Transverse colon (tissue), 4 donors: ENCODE measurements at regions of chr7 and their contacts with region 1.

Region 1: DNA sequence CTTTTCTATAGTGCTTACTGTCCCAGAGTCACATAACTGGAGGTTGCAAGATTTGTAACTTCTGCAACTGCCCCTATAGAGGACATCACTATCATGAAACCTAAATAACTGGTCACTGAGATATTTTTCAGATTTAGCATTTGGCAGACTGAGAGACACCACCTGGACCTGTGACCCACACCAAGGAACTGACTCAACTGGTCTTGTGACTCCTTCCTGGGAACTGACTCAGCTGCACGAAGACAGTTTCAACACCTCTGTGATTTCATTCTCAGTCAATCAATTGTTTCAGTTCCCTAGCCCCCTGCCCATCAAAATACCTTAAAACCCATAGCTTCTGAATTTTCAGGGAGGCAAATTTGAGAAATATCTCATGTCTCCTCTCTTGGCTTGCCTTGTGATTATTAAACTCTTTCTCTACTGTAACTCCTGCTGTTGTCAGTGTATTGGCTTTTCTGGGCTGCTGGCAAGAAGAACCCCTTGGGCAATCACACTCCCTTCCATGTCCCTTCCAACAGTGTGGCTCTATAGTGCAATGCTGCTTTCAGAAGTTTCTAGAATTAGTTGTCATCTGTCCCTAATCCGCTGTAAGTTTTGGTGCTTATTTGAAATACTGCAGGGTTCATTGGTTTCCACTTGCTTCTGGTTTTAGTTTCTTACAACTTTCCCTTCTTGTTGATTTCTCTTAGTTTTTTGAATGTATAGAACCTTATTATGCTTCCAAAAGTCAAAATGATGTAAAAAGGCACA is 127.8 kb upstream of the ADCY1 start:
- DNase-seq: no peak
- H3K4me3 ChIP-seq: no peak overlapping the region
- H3K27ac ChIP-seq: no peak overlapping the region
- H3K4me1 ChIP-seq: no peaks in the 10 kb centered on the region
- H3K27me3 ChIP-seq: no peaks in the 10 kb centered on the region
- CTCF ChIP-seq: no peak
- EP300 ChIP-seq: no peak
- POLR2A ChIP-seq: no peak

Region 2: GRCh38 chr7:44936322-44936721 is 510.0 kb before region 1 on chr7:
- in situ Hi-C with region 1: no loop called
- intact Hi-C with region 1: loop called (anchors 5 kb)
- DNase-seq: no peak
- H3K4me3 ChIP-seq: no peak overlapping the region
- H3K27ac ChIP-seq: no peak overlapping the region
- H3K4me1 ChIP-seq: no peaks in the 10 kb centered on the region
- H3K27me3 ChIP-seq: peaks cover 1% of the 10 kb centered on the region
- CTCF ChIP-seq: no peak
- EP300 ChIP-seq: no peak
- POLR2A ChIP-seq: no peak

Region 3: DNA sequence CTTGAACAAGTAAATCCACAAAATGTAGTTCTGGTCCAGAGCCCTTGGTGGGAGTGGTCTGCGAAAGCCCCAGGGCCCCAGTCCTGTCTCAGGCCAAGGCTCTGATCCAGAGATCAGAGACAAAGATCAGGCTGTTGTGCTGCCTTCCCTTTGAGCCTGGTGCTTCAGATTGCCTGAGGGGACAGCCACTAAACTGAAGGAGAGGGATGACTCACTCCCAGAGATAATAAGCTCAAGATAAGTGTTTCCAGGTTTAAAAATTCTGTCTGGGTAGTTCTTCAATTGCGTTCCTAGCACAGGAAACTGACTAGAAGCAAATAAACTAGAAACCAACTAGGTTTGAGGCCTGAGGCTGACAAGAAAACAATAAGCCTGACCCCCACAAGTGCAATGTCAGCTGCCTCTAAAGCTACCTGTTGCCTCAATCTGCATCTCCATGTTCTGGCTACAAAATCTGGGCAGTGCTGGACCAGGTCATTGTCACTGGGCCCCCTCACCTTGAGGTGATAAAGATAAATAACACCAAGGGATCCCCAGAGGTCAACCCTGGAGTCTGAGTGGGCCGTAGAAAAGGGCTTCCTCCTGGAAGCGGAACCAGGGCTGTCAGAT is 98.5 kb before region 1 on chr7:
- in situ Hi-C with region 1: no loop called
- intact Hi-C with region 1: no loop called
- DNase-seq: no peak
- H3K4me3 ChIP-seq: no peak overlapping the region
- H3K27ac ChIP-seq: no peak overlapping the region
- H3K4me1 ChIP-seq: no peaks in the 10 kb centered on the region
- H3K27me3 ChIP-seq: no peaks in the 10 kb centered on the region
- CTCF ChIP-seq: no peak
- EP300 ChIP-seq: no peak
- POLR2A ChIP-seq: no peak

Region 4: GRCh38 chr7:46089281-46089680 is 642.9 kb after region 1 on chr7:
- in situ Hi-C with region 1: no loop called
- intact Hi-C with region 1: no loop called
- DNase-seq: no peak
- H3K4me3 ChIP-seq: no peak overlapping the region
- H3K27ac ChIP-seq: no peak overlapping the region
- H3K4me1 ChIP-seq: no peaks in the 10 kb centered on the region
- H3K27me3 ChIP-seq: no peaks in the 10 kb centered on the region
- CTCF ChIP-seq: no peak
- EP300 ChIP-seq: no peak
- POLR2A ChIP-seq: no peak